Activated T-helper 1 cell treated with anti-CD3 and anti-CD28 coated beads, Interleukin-12 subunit alpha, Interleukin-12 subunit beta, Interleukin-2, Interleukin-4 antibody, amounts not matched to agents 30 ng/mL and 10 ng/mL and 1 ng/mL, durations not matched to agents 14 hours and 24 hours and 36 hours (primary cell): ENCODE measurements at regions of chr14 and their contacts with region 1.

Region 1: DNA sequence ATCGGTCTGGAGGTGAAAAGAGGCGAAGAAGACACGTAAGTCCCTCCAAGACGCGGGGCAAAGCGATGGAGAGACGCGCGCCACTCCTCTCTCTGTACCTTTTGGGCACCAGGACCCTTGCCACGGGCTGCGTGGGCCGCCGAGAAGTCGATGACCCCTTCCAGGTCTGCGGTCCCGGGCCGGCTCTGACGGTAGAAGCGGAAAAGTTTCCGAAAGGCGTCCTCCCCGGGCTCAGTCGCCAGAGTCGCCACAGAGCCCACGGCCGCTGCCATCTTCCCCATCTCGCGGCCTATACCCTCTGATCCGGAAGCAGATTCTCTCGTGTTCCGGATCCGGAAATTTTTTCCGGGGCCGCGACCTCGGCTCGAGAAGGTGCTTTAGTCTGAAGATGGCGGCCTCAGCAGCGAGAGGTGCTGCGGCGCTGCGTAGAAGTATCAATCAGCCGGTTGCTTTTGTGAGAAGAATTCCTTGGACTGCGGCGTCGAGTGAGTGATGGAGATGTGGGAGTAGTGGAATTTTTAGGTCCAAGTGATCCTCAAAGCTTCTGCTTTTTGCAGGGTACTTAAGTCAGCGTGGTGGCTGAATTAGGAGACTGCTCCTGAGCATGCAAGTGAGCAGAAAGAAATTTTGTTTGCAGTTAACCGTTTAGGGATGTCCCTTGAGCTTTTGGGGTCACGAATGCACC is at the starts of genes ALKBH1 and SLIRP:
- DNase-seq: peak; percentile 81
- H3K4me3 Mint-ChIP-seq: peak within 1 kb of the TSS; percentile 99
- H3K27ac Mint-ChIP-seq: peak within 1 kb of the TSS; percentile 98
- H3K4me1 Mint-ChIP-seq: peaks cover 41% of the 10 kb centered on the region
- H3K27me3 Mint-ChIP-seq: no peaks in the 10 kb centered on the region
- total RNA-seq, gene ALKBH1: 16.3 and 21.9 TPM in 2 replicates
- total RNA-seq, gene SLIRP: 177 and 178 TPM in 2 replicates

Region 2: GRCh38 chr14:77033622-77034521 is 674.0 kb before region 1 on chr14:
- intact Hi-C with region 1: loop called (anchors 10 kb)
- DNase-seq: peak; percentile 80
- H3K4me3 Mint-ChIP-seq: peak overlapping the region; percentile 87
- H3K27ac Mint-ChIP-seq: peak overlapping the region; percentile 98
- H3K4me1 Mint-ChIP-seq: peaks cover 79% of the 10 kb centered on the region
- H3K27me3 Mint-ChIP-seq: no peaks in the 10 kb centered on the region

Region 3: DNA sequence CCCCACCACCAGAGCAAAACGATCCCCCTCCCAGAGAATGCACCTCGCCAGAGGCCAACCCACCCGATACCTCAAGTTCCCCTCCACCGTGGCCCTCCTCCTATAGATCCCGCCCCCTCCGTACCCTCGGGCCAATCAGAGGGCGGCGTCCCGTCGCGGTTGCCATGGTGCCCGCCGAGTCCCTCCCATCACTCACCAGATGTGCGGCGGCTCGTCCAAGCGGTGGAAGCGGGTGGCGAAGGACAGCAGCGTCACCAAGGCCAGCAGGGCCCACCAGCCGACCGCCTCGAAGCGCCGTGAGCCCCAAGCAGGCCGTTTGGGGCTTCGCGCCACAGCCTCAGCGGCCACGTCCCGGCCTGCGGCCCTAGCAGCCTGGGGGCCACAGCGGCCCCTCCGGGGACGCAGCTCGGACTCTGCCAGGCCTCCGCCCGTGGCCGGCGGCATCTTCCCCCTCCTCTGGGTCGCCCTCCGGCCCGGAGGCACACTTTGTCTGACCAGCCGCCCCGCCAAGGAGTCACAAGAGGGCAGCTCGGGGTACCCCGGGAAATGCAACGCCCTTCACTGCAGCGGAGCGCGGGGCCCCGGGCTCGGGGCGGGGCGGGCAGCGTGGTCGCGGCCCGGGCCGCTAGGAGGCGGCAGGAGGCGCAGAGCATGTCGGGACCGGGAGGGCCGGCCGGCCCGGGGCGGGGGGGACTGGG is 387.5 kb before region 1 on chr14 and contains the start of gene POMT2:
- intact Hi-C with region 1: loop called (anchors 1 kb)
- DNase-seq: peak; percentile 92
- H3K4me3 Mint-ChIP-seq: peak within 1 kb of the TSS; percentile 92
- H3K27ac Mint-ChIP-seq: peak within 1 kb of the TSS; percentile 99
- H3K4me1 Mint-ChIP-seq: peaks cover 22% of the 10 kb centered on the region
- H3K27me3 Mint-ChIP-seq: no peaks in the 10 kb centered on the region
- total RNA-seq, gene POMT2: 20.5 and 22.1 TPM in 2 replicates

Region 4: DNA sequence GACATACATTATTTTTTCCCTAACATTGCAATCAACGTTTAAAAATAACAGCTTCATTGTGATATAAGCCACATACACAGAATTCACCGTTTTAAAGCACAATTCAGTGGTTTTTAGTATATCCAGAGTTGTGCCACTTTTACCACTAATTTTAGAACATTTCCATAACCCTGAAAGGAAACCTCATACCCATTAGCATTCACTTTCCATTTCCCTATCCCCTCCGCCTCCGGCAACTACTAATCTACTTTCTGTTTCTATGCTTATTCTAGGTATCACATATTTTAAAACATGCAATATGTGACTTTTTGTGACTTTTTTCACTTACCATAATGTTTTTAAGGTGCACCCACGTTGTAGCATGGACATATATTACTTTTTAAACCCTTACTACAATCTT is 153.7 kb before region 1 on chr14:
- intact Hi-C with region 1: loop called (anchors 5 kb)
- DNase-seq: no peak
- H3K4me3 Mint-ChIP-seq: peak overlapping the region; percentile 45
- H3K27ac Mint-ChIP-seq: peak overlapping the region; percentile 47
- H3K4me1 Mint-ChIP-seq: peaks cover 17% of the 10 kb centered on the region
- H3K27me3 Mint-ChIP-seq: no peaks in the 10 kb centered on the region

Region 5: GRCh38 chr14:77616454-77617229 is 91.2 kb before region 1 on chr14 and contains the start of gene SPTLC2:
- intact Hi-C with region 1: loop called (anchors 1 kb)
- DNase-seq: peak; percentile 95
- H3K4me3 Mint-ChIP-seq: peak within 1 kb of the TSS; percentile 95
- H3K27ac Mint-ChIP-seq: peak within 1 kb of the TSS; percentile 96
- H3K4me1 Mint-ChIP-seq: peaks cover 46% of the 10 kb centered on the region
- H3K27me3 Mint-ChIP-seq: peaks cover 2% of the 10 kb centered on the region
- total RNA-seq, gene SPTLC2: 29.9 and 31.9 TPM in 2 replicates

Region 6: GRCh38 chr14:77660754-77661153 is 47.1 kb before region 1 on chr14:
- intact Hi-C with region 1: loop called (anchors 1 kb)
- DNase-seq: no peak
- H3K4me3 Mint-ChIP-seq: no peak overlapping the region
- H3K27ac Mint-ChIP-seq: no peak overlapping the region
- H3K4me1 Mint-ChIP-seq: peaks cover 5% of the 10 kb centered on the region
- H3K27me3 Mint-ChIP-seq: peaks cover 4% of the 10 kb centered on the region

Region 7: DNA sequence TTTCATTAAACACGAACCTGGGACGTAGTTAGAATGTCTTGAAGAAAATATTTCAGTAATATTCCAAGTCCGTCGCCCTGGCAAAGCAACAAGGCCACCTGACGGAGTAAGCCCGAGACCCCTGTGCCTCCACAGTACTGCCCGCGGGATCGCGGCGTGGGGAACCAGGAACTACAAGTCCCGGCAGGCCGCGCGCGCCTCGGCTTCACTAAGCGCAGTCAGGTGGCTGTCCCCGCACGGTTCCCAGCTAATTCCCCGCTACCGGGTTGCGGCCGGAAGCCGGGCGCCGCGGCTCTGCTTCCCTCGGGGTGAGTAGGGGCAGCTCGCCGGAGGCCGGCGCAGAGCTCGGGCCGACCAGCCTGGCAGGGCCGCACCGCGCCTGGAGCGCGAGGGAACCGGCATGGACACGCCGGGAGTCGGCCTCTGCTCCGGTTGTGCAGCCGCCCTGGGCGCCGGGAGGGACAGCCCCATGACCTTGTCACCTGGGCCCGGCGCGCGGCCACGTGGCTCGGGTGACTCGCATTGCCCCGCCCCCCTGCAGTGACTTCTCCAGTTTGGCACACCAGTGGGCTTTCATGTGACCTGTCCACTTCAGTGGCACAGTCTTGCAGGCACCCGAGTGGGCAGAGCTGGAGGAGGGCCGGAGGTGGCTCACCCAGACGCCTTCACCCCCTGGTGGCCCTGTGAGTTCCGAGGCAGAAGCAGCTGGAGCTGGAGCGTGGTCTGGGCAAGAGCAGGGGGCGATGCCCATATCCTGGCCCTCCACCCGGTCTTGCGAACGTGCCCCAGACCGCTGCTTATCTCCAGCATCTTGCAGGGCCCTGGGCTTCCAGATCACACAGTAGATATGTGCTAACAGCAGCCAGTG is 92.2 kb after region 1 on chr14 and contains the start of gene ADCK1:
- intact Hi-C with region 1: loop called (anchors 1 kb)
- DNase-seq: peak; percentile 81
- H3K4me3 Mint-ChIP-seq: peak within 1 kb of the TSS; percentile 88
- H3K27ac Mint-ChIP-seq: peak within 1 kb of the TSS; percentile 80
- H3K4me1 Mint-ChIP-seq: peaks cover 14% of the 10 kb centered on the region
- H3K27me3 Mint-ChIP-seq: peaks cover 5% of the 10 kb centered on the region
- total RNA-seq, gene ADCK1: 3.9 and 5.4 TPM in 2 replicates